Naive thymus-derived CD4-positive, alpha-beta T cell (primary cell): ENCODE measurements at regions of chr1 and their contacts with region 1.

Region 1: DNA sequence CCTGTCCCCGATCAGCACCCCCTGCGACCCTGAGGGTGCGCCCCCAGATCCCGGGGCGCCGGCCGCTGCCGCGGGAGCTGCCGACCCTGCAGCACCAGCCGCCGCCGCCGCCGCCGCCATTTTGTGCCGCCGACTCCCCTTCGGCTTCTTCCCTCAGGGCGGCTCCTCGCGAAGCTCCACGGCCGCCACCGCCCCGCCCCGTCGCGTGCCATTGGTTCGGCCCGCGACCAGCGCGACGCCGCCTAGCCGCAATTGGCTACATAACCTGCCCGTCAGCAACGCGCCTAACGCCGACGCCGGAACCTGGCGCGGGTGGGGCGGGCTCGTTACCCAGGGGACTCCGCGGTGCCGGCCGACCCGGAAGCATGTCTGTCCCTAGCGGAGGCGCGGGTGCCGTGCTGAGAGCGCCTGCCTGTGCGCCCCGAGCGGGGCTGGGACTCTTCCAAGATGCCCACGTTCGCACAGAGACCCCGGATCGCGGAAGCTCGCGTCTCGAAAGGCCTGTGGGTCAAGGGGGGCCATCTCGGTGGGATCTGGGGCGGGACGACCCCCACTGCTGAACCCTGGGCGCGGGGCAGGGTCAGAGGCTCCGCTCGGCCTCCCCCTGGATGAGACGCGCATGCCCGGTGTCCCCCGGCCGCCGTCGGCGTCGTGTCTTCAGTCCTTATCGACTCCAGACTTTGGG is at the start of gene CCNL2:
- DNase-seq: peak; percentile 98 to 99 (median 99)
- ATAC-seq: peak; percentile 97
- H3K4me3 ChIP-seq: peak within 1 kb of the TSS; percentile 99
- H3K4me3 Mint-ChIP-seq: peak within 1 kb of the TSS; percentile 85 to 94 (median 90)
- H3K27ac ChIP-seq: peak within 1 kb of the TSS; percentile 91
- H3K27ac Mint-ChIP-seq: peak within 1 kb of the TSS; percentile 78 to 93 (median 89)
- H3K4me1 ChIP-seq: peaks cover 20 to 23% of the 10 kb centered on the region in 2 donors
- H3K4me1 Mint-ChIP-seq: peaks cover 22 to 65% (median 43%) of the 10 kb centered on the region in 7 donors
- H3K27me3 ChIP-seq: no peaks in the 10 kb centered on the region
- H3K27me3 Mint-ChIP-seq: no peaks in the 10 kb centered on the region
- total RNA-seq, gene CCNL2: 130 to 403 (median 278) TPM

Region 2: GRCh38 chr1:1273512-1274298 is 125.6 kb before region 1 on chr1 and contains the start of gene UBE2J2:
- CTCF ChIA-PET with region 1: no interaction called
- POLR2A ChIA-PET with region 1: interaction called, 6 read pairs
- intact Hi-C with region 1: loop called in 1 of 2 experiments (anchors 2 kb)
- DNase-seq: peak; percentile 83 to 92 (median 90)
- ATAC-seq: peak; percentile 99
- H3K4me3 ChIP-seq: peak within 1 kb of the TSS; percentile 77
- H3K4me3 Mint-ChIP-seq: peak within 1 kb of the TSS; percentile 79 to 92 (median 88)
- H3K27ac ChIP-seq: peak within 1 kb of the TSS; percentile 90
- H3K27ac Mint-ChIP-seq: peak within 1 kb of the TSS; percentile 36 to 94 (median 83)
- H3K4me1 ChIP-seq: peaks cover 28 to 39% of the 10 kb centered on the region in 2 donors
- H3K4me1 Mint-ChIP-seq: peaks cover 21 to 45% (median 35%) of the 10 kb centered on the region in 7 donors
- H3K27me3 ChIP-seq: no peaks in the 10 kb centered on the region
- H3K27me3 Mint-ChIP-seq: no peaks in the 10 kb centered on the region
- total RNA-seq, gene UBE2J2: 62.3 to 89.3 (median 75.1) TPM

Region 3: DNA sequence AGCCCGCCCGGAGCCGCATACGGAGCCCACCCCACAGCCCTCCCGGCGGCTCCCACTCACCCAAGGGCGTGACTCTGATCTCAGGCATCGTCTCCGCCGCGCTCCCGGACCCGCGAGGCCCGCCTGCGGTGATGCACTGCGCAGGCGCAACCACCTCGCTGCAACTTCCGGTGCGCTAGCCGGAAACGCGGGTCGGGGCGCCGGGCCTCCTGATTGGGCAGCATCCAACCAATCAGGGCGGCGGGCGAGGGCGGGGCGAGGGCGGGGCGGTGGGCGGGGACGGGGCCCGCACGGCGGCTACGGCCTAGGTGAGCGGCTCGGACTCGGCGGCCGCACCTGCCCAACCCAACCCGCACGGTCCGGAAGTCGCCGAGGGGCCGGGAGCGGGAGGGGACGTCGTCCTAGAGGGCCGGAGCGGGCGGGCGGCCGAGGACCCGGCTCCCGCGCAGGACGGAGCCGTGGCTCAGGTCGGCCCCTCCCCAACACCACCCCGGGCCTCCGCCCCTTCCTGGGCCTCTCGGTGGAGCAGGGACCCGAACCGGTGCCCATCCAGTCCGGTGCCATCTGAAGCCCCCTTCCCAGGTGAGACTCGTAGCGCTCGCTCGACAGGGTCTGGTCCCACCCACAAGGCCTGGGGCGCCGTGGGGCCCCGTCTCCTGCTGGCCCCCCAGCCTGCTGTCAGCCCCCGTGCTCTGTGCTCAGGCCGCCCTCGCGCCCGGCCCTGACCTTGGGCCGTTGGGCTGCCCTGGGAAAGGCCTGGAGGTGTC is 74.6 kb before region 1 on chr1 and contains the starts of genes CPTP and INTS11:
- CTCF ChIA-PET with region 1: no interaction called
- POLR2A ChIA-PET with region 1: no interaction called
- intact Hi-C with region 1: loop called in 1 of 2 experiments (anchors 2 kb)
- DNase-seq: peak; percentile 93 to 97 (median 95)
- ATAC-seq: peak; percentile 93
- H3K4me3 ChIP-seq: peak within 1 kb of the TSS; percentile 77
- H3K4me3 Mint-ChIP-seq: peak within 1 kb of the TSS; percentile 83 to 96 (median 90)
- H3K27ac ChIP-seq: peak within 1 kb of the TSS; percentile 92
- H3K27ac Mint-ChIP-seq: peak within 1 kb of the TSS; percentile 67 to 94 (median 91)
- H3K4me1 ChIP-seq: peaks cover 18 to 34% of the 10 kb centered on the region in 2 donors
- H3K4me1 Mint-ChIP-seq: peaks cover 12 to 53% (median 31%) of the 10 kb centered on the region in 7 donors
- H3K27me3 ChIP-seq: no peaks in the 10 kb centered on the region
- H3K27me3 Mint-ChIP-seq: no peaks in the 10 kb centered on the region
- total RNA-seq, gene CPTP: 11.5 to 29.3 (median 19.1) TPM
- total RNA-seq, gene INTS11: 126 to 187 (median 161) TPM

Region 4: GRCh38 chr1:1387098-1388077 is 11.9 kb before region 1 on chr1:
- CTCF ChIA-PET with region 1: interaction called, 3 read pairs
- POLR2A ChIA-PET with region 1: interaction called, 12 read pairs
- intact Hi-C with region 1: no loop called
- DNase-seq: no peak
- ATAC-seq: no peak
- H3K4me3 ChIP-seq: no peak overlapping the region
- H3K4me3 Mint-ChIP-seq: no peak overlapping the region
- H3K27ac ChIP-seq: no peak overlapping the region
- H3K27ac Mint-ChIP-seq: no peak overlapping the region
- H3K4me1 ChIP-seq: no peaks in the 10 kb centered on the region
- H3K4me1 Mint-ChIP-seq: peaks cover 0 to 5% (median 0%) of the 10 kb centered on the region in 7 donors
- H3K27me3 ChIP-seq: no peaks in the 10 kb centered on the region
- H3K27me3 Mint-ChIP-seq: no peaks in the 10 kb centered on the region

Region 5: DNA sequence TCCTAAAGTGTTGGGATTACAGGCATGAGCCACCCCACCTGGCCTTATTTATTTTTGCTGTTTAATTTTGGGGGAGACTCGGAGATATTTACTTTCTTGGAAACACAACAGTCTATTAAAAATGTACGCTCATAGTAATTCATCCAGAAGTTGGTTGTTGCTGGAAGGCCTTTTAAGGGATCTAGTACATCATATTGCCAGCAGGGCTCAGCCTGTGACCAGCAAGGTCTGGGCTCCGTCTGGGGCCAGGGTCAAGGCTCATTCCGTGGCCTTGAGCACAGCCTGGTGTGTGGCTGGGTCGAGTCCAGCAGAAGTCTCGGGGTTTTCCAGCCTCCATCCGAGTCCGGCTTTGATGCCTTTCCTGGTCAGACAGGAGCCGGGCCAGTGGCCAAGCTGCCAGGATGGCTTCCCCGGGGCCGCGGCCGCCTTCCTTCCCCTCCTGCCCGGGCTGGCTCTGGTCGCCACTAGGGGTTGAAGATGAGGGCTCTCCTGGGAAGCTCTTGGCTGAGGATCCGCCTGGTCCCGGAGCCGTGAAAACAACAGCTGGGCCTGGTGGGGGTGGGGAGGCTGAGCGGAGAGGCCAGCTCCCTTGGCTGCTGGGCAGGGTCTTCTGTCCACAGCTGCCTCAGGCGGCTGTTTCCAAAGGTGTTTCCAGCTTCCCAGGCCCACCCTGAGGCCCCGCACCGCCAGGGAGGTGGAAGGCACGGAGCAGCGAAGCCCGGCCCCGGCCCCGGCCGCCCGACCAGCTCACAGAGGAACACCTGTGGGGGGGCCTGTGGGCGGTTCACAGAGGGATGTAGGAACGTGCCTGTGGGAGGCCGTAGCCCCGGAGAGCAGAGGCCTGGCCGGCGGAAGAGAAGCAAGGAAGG is 31.0 kb after region 1 on chr1:
- CTCF ChIA-PET with region 1: no interaction called
- POLR2A ChIA-PET with region 1: no interaction called
- intact Hi-C with region 1: no loop called
- DNase-seq: no peak
- ATAC-seq: no peak
- H3K4me3 ChIP-seq: no peak overlapping the region
- H3K4me3 Mint-ChIP-seq: no peak overlapping the region
- H3K27ac ChIP-seq: no peak overlapping the region
- H3K27ac Mint-ChIP-seq: no peak overlapping the region
- H3K4me1 ChIP-seq: peaks cover 0 to 4% of the 10 kb centered on the region in 2 donors
- H3K4me1 Mint-ChIP-seq: peaks cover 0 to 18% (median 8%) of the 10 kb centered on the region in 7 donors
- H3K27me3 ChIP-seq: peaks cover 0 to 9% of the 10 kb centered on the region in 2 donors
- H3K27me3 Mint-ChIP-seq: peaks cover 17 to 27% (median 20%) of the 10 kb centered on the region in 5 donors

Region 6: DNA sequence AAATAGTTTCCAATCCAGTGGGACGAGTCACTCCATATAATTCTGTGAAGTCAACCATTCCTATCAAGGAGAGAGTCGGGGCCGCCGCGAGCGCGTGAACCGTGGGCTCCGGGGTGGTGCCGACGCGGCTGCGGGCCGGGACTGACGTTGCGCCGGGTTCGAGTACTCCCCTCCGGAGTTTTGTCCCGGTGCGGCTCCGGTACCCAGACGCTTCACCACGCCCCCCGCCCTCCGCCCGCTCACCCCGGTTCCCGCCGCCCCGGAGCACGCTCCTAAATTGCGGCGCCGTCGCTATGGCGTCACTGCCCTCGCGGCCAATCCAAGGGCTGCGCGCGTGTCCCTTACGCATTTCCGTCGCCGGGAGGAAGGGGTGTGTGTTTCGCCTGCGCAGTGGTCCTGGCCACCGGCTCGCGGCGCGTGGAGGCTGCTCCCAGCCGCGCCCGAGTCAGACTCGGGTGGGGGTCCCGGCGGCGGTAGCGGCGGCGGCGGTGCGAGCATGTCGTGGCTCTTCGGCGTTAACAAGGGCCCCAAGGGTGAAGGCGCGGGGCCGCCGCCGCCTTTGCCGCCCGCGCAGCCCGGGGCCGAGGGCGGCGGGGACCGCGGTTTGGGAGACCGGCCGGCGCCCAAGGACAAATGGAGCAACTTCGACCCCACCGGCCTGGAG is 72.2 kb after region 1 on chr1 and contains the start of gene ATAD3B:
- CTCF ChIA-PET with region 1: no interaction called
- POLR2A ChIA-PET with region 1: no interaction called
- intact Hi-C with region 1: loop called in 1 of 2 experiments (anchors 1 kb)
- DNase-seq: peak; percentile 80 to 95 (median 88)
- ATAC-seq: peak; percentile 98
- H3K4me3 ChIP-seq: peak within 1 kb of the TSS; percentile 68
- H3K4me3 Mint-ChIP-seq: peak within 1 kb of the TSS; percentile 78 to 97 (median 89)
- H3K27ac ChIP-seq: peak within 1 kb of the TSS; percentile 90
- H3K27ac Mint-ChIP-seq: peak within 1 kb of the TSS; percentile 77 to 98 (median 92)
- H3K4me1 ChIP-seq: peaks cover 9 to 14% of the 10 kb centered on the region in 2 donors
- H3K4me1 Mint-ChIP-seq: peaks cover 6 to 39% (median 25%) of the 10 kb centered on the region in 7 donors
- H3K27me3 ChIP-seq: no peaks in the 10 kb centered on the region
- H3K27me3 Mint-ChIP-seq: no peaks in the 10 kb centered on the region
- total RNA-seq, gene ATAD3B: 42.5 to 53.8 (median 51.7) TPM

Region 7: GRCh38 chr1:1511533-1512285 is 112.4 kb after region 1 on chr1 and contains the start of gene ATAD3A:
- CTCF ChIA-PET with region 1: interaction called, 5 read pairs
- POLR2A ChIA-PET with region 1: no interaction called
- intact Hi-C with region 1: loop called in 1 of 2 experiments (anchors 1 kb)
- DNase-seq: peak; percentile 84 to 96 (median 94)
- ATAC-seq: peak; percentile 96
- H3K4me3 ChIP-seq: peak within 1 kb of the TSS; percentile 98
- H3K4me3 Mint-ChIP-seq: peak within 1 kb of the TSS; percentile 82 to 94 (median 90)
- H3K27ac ChIP-seq: peak within 1 kb of the TSS; percentile 85
- H3K27ac Mint-ChIP-seq: peak within 1 kb of the TSS; percentile 81 to 96 (median 92)
- H3K4me1 ChIP-seq: peaks cover 4 to 5% of the 10 kb centered on the region in 2 donors
- H3K4me1 Mint-ChIP-seq: peaks cover 6 to 21% (median 14%) of the 10 kb centered on the region in 7 donors
- H3K27me3 ChIP-seq: no peaks in the 10 kb centered on the region
- H3K27me3 Mint-ChIP-seq: no peaks in the 10 kb centered on the region
- total RNA-seq, gene ATAD3A: 21.0 to 41.3 (median 22.9) TPM

Region 8: DNA sequence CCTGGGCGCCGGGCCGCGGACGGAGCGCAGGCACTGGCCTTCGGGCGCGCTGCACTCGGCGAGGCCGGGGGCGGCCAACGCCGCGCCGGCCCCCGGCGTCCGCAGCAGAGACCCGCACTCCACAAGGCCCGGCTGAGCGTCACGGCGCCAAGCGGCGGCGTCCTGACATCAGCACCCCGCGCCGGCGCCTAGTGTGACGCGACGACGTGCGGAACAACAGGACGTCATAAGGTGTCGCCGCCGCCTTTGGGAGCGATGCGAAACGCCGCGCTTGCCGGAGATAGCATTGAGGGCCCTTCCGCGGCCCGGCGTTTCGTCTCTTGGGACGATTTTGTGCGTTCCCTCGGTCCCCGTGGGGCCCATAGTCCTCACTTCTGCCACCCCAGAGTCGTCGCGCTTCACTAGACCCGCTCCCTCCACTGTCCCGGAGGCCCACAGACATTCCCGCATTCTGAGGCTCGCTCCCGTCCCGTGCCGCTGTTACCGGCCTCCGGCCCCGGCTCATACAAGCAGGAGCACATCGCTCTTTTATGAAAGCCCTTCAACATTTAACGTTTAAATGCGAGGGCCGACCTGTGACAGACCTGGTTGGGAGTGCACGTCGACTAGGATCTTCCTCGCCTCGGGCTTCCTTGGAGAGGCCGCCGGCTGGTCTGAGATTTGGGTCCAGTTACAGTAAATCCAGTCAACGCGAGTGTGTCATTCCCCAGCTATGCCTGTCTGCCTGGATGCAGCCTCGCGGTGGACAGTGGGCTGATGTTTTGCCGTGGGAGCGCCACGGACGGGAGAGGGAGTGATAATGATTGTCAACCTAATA is 175.6 kb after region 1 on chr1 and contains the start of gene SSU72:
- CTCF ChIA-PET with region 1: no interaction called
- POLR2A ChIA-PET with region 1: interaction called, 3 read pairs
- intact Hi-C with region 1: loop called in 1 of 2 experiments (anchors 1 kb)
- DNase-seq: peak; percentile 90 to 97 (median 93)
- ATAC-seq: peak; percentile 94
- H3K4me3 ChIP-seq: peak within 1 kb of the TSS; percentile 93
- H3K4me3 Mint-ChIP-seq: peak within 1 kb of the TSS; percentile 97 to 99 (median 98)
- H3K27ac ChIP-seq: peak within 1 kb of the TSS; percentile 98
- H3K27ac Mint-ChIP-seq: peak within 1 kb of the TSS; percentile 98 to 100 (median 99)
- H3K4me1 ChIP-seq: peaks cover 22 to 26% of the 10 kb centered on the region in 2 donors
- H3K4me1 Mint-ChIP-seq: peaks cover 21 to 42% (median 31%) of the 10 kb centered on the region in 7 donors
- H3K27me3 ChIP-seq: no peaks in the 10 kb centered on the region
- H3K27me3 Mint-ChIP-seq: peaks cover 0 to 2% (median 0%) of the 10 kb centered on the region in 5 donors
- total RNA-seq, gene SSU72: 121 to 148 (median 137) TPM